ENCODE measurements at regions of chr21 and their contacts with region 1.

Region 1: DNA sequence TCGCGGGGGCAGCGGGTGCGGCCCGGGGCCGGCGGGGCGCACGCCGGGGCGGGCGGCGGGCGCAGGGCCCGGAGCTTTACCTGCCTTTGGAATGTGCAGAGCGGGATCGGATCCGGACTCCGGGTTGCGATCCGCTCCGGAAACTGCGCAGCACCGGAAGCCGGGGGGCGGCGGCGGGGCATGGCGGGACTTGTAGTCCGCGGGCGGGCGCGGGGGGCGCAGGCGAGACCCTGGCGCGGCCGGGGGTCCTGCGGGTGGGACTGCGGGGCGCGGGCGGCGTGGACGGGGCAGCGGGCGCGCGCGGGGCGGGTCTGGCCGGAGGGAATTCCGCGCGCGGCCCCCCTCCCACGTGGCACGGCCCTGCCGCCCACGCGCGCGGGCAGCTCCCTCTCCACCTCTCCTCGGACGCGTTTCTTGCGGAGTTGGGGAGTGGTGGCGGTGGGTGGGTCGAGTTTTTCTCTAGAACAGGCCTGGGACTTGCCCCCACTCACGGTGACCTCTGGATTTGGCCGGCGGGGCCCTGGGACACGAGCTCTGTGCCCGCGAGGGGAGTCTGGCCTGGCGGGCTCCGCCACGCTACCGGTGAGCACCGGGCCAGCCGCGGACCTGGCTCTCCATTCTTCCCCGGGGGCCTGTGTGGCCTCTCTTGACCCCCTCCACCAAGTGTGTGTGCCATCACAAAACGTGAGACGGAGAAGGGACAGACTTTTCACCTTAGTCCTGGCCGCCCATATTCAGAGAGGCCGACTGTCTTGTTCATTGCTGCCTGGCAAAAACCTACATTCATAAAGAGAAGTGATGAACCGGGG is at the start of gene PRDM15:
- DNase-seq: peak; percentile 83
- H3K4me3 Mint-ChIP-seq: peak within 1 kb of the TSS; percentile 86
- H3K27ac Mint-ChIP-seq: peak within 1 kb of the TSS; percentile 86
- H3K4me1 Mint-ChIP-seq: peaks cover 25% of the 10 kb centered on the region
- H3K27me3 Mint-ChIP-seq: no peaks in the 10 kb centered on the region
- total RNA-seq, gene PRDM15: 7.0 to 8.1 TPM

Region 2: DNA sequence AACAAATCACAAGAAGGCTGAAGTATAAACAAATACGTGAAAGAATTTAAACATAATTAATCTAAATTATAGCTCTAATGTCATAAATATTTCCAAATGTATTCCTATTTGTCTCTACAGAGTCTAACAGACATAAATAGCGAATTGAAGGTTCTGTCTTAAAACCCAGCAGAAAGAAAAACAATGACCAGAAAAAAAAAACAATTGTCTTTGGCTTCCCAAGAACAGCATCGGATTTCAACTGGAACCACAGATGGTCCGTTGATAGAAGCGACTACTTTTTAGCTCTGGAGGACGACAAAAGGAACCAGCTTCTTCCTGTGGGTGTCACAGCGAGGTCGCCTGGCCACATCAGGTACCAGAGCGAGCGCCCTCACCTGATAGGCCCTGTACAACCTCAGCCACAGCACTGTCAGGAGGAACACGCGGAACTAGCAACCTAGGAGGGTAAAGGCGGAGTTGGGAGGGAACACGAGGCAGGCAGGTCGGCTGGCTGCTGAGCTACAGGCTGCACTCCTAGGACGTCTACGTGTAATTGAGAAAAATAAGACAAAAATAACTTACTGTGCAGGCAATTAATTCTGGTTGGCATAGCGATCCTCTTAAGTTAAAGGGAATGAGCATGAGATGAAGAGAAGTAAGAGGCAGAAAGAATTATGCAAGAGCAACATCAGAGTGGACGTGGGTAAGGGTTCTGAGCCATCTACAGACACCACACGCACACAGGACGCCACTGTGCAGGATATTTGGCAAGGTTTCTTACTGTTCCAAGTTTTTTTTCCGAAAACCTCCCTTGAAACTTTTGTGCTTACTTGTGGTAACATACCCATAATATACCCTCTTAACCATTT is 16.5 kb after region 1 on chr21:
- CTCF ChIA-PET with region 1: interaction called, 3 read pairs
- POLR2A ChIA-PET with region 1: interaction called, 12 read pairs
- DNase-seq: peak; percentile 58
- H3K4me3 Mint-ChIP-seq: no peak overlapping the region
- H3K27ac Mint-ChIP-seq: no peak overlapping the region
- H3K4me1 Mint-ChIP-seq: peaks cover 16% of the 10 kb centered on the region
- H3K27me3 Mint-ChIP-seq: no peaks in the 10 kb centered on the region

Region 3: DNA sequence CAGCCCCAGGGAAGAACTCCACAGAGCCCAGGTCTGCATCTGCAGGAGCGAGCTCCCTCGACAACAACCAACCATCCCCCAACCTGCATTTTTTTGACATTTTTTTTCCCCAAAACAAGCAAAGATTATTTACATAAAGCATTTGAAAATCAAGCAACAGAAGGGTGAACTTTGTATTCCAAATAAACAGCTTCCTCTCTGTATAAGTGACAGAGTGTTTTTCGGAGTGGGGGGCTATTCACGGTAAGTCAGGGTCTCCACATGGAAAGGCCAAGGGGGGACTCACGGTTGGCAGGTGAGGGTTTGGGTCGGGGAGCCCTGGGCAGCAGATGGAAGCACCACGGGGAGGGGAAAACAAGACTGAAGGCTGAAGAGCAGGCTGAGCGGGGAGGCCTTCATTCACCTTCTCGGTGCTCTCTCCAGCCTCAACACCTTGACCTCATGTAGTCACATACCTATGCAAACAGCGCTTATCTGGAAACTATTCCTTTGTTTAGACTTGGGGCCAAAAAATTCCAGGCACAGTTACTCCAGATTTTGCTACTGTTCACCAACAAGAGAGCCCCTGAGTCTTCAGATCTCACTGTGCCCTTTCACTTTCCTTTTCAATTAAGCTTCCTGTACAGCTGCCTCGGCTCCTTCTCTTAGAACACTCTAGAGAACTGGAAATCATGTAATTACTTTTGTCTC is 46.9 kb after region 1 on chr21:
- CTCF ChIA-PET with region 1: interaction called, 4 read pairs
- POLR2A ChIA-PET with region 1: interaction called, 27 read pairs
- DNase-seq: peak; percentile 39
- H3K4me3 Mint-ChIP-seq: peak overlapping the region; percentile 87
- H3K27ac Mint-ChIP-seq: peak overlapping the region; percentile 86
- H3K4me1 Mint-ChIP-seq: peaks cover 52% of the 10 kb centered on the region
- H3K27me3 Mint-ChIP-seq: no peaks in the 10 kb centered on the region

Region 4: DNA sequence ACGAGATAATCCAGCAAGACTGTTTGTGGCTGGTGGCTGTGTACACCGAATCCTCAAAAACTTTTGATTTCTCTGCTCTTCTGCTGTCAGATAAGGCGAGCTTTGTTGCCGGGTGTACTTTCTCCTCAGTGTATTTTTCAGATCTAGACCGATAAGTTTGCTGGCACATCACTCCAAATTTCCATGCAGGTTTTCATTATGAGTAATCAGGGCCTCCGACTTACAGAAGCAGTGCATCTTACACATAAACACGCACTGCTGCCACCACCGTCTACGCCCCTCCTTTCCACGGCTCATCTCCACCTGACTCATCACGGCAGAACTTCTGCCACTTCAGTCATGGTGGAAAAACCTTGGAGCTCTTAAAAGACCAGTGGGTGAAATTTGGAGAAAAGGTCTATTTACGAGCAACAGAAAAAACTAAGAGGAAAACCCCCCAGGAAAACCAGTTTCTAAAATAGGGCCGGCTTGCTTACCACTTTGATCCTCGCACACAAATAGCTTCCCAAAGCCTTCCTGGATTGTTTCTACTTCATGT is 123.1 kb after region 1 on chr21:
- CTCF ChIA-PET with region 1: no interaction called
- POLR2A ChIA-PET with region 1: interaction called, 12 read pairs
- DNase-seq: peak; percentile 73
- H3K4me3 Mint-ChIP-seq: no peak overlapping the region
- H3K27ac Mint-ChIP-seq: peak overlapping the region; percentile 8
- H3K4me1 Mint-ChIP-seq: peaks cover 32% of the 10 kb centered on the region
- H3K27me3 Mint-ChIP-seq: peaks cover 12% of the 10 kb centered on the region

Region 5: GRCh38 chr21:42009831-42010523 is 130.6 kb after region 1 on chr21 and contains the start of gene ZBTB21:
- CTCF ChIA-PET with region 1: no interaction called
- POLR2A ChIA-PET with region 1: interaction called, 12 read pairs
- DNase-seq: peak; percentile 98
- H3K4me3 Mint-ChIP-seq: peak within 1 kb of the TSS; percentile 88
- H3K27ac Mint-ChIP-seq: peak within 1 kb of the TSS; percentile 96
- H3K4me1 Mint-ChIP-seq: peaks cover 22% of the 10 kb centered on the region
- H3K27me3 Mint-ChIP-seq: peaks cover 33% of the 10 kb centered on the region
- total RNA-seq, gene ZBTB21: 18.0 to 18.4 TPM

Region 6: DNA sequence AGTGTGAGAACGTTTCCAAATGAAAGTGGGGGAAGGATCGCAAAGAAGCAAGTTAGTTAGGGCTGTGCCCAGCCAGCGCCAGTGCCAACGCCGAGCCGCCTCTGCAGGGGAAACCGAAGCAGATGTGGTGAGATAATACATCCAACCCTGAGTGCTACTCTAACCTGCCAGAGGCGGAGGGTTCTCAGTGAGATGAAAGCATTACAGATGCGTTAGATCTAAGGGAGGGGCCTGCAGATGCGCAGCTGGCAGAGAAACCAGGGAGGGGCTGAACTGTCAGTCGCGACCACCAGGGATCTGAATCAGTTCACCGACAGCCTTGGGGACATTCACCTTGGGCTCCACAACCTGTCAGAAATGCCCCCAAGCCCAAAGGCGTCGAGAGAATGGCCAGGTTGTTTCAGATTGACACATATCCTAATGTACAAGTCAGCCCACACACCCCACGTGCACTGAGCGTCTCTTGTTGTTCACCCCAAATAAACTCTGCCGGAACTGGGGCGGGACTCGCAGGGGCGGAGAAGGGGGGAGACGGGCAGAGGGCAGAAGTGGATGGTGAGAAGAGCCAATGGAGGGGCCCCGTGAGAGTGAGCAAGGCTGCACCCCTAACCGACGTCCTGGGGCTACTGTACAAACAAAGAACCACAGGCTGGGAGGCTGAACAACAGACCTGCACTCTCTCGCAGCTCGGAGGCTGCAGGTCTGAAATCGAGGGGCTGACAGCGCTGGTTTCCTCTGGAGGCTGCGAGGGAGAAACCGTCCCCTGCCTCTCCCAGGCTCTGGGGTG is 183.0 kb after region 1 on chr21:
- CTCF ChIA-PET with region 1: no interaction called
- POLR2A ChIA-PET with region 1: interaction called, 11 read pairs
- DNase-seq: peak; percentile 88
- H3K4me3 Mint-ChIP-seq: peak overlapping the region; percentile 74
- H3K27ac Mint-ChIP-seq: peak overlapping the region; percentile 98
- H3K4me1 Mint-ChIP-seq: peaks cover 47% of the 10 kb centered on the region
- H3K27me3 Mint-ChIP-seq: peaks cover 6% of the 10 kb centered on the region

Region 7: GRCh38 chr21:42117229-42117966 is 238.0 kb after region 1 on chr21:
- CTCF ChIA-PET with region 1: interaction called, 11 read pairs
- POLR2A ChIA-PET with region 1: interaction called, 3 read pairs
- DNase-seq: peak; percentile 72
- H3K4me3 Mint-ChIP-seq: no peak overlapping the region
- H3K27ac Mint-ChIP-seq: no peak overlapping the region
- H3K4me1 Mint-ChIP-seq: peaks cover 27% of the 10 kb centered on the region
- H3K27me3 Mint-ChIP-seq: peaks cover 65% of the 10 kb centered on the region

Measured in activated CD4-positive, alpha-beta memory T cell treated with anti-CD3 and anti-CD28 coated beads, Interleukin-2, amount 10 ng/mL, durations not matched to agents 7 days and 5 days (primary cell).